Breast epithelium (tissue), 4 donors: ENCODE measurements at regions of chr14 and their contacts with region 1.

Region 1: DNA sequence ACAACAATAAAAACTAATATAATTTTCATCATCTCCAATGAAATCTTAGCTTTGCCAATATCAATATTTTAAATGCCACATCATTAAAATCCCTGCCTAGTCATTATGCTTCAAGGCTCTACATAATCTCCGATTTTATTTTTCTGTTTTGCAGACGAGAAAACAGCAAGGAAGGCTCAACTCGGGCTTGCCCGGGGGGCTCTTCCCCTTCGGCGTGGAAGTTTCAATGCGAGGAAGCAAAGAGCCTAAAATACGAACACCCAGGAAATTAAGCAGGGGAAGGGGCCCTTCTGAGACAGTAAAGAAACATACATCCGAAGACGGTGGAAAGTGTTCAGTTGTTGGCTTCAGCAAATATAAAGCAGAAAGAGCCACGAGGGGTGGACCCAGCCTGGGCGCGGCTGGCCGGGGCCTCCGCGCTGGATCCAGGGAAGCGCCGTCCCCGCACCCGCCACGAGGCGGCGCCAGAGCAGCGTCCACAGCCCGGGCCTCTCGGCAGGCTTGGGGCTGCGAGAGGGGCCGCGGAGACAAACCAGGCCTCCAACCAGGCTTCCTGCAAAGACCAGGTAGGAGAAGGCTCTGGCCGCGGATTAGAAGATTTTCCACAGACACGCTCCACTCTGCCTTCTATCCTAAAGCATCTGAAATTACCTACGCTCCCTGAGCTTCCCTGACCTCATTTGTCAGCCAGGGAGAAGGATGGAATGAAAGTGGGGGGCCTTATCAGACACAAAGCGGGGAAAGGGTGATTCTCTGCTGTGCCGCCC is 77.2 kb downstream of the SERPINA3 start:
- DNase-seq: peak; percentile 27 to 67
- H3K4me3 ChIP-seq: peak overlapping the region in 1 of 3 donors; percentile 45
- H3K27ac ChIP-seq: no peak overlapping the region
- H3K4me1 ChIP-seq: peaks cover 0 to 5% of the 10 kb centered on the region in 2 donors
- H3K27me3 ChIP-seq: no peaks in the 10 kb centered on the region
- CTCF ChIP-seq: peak; percentile 93 to 98 (median 95)
- POLR2A ChIP-seq: no peak

Region 2: DNA sequence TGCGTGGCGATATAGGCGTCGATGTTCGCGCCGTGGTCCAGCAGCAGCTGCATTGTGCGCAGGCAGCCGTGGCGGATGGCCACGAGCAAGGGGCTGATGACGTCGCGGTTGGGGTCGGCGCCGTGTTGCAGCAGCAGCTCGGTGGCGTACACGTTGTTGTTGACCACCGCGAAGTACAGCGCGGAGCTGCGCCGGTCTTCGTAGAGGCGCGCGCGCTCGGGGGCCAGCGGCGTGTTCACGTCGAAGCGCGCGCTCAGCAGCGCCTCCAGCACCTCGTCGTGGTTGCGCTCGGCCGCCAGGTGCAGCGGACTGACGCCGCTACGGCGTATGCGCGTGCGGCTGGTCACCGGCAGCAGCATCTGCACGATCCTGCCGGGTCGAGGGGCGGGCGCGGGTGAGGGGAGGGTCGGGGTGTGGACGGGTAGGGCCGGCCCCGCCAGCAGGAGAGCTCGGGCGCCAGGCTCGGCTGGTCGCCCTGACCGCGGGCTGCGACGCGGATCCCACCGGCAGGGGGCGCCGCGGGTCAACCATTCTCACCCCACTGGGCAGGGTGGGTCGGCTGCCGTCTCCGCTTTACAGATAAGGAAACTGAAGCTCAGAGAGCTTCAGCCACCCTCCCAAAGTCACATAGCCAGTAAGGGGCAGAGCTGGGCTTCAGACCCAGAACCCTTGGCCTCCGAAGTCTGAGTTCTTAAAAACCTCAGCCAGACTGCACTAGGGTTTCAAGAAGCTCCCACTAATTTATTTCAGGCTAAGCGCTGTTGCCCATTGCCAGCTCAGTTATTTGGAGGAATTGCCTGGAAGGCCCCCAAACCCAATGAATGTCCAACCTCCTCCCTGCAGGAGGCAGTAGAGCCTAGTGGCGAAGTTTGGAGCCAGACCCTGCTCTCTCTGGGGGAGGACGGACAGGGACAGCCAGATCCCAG is 749.8 kb before region 1 on chr14:
- intact Hi-C with region 1: loop called (anchors 10 kb)
- DNase-seq: peak; percentile 59 to 61
- H3K4me3 ChIP-seq: peak overlapping the region in 2 of 3 donors; percentile 33 to 61
- H3K27ac ChIP-seq: no peak overlapping the region
- H3K4me1 ChIP-seq: no peaks in the 10 kb centered on the region
- H3K27me3 ChIP-seq: peaks cover 0 to 9% of the 10 kb centered on the region in 2 donors
- CTCF ChIP-seq: peak; percentile 49 to 69 (median 62)
- POLR2A ChIP-seq: no peak

Region 3: DNA sequence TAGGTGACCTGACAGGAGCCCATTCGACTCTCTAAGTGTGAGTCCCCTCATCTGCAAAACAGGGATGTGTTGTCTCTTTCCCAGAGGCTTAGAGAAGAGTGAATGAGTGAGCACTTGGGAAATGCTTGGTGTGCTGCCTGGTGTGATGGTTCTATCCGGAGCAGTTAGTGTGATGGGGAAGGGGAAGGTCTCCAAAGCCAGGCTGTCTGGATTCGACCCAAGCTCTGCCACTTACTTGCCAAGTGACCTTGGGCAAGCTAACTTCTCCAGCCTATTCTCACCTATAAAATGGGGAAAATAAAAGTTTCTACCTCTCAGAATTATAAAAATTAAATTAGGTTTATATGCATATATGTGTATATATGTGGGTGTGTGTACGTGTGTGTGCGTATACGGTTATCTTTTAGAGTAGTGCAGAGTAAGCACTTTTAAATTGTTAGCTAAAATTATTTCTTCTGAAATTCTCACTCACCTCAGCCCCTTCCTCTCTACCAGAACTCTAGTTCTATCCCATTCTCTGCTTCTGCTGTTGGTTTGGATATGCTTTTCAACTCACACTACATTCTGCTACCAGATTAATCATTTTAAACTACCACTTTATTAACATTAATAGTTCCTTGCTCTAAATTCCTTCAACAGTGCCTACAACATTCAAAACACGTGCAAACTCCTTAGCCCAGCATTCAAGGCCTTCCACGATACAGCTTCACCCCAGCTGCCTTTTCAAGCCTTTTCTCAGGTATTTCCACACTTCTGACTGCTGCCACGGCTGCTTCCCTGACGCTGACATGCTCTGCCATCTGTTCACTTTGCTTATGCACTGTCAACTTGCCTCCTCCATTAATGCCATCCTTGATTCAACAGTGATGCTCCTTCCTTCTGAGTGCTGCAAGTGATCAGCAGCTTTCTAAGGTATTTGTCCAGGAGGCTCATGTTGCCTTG is 412.6 kb after region 1 on chr14:
- intact Hi-C with region 1: loop called (anchors 5 kb)
- DNase-seq: no peak
- H3K4me3 ChIP-seq: no peak overlapping the region
- H3K27ac ChIP-seq: no peak overlapping the region
- H3K4me1 ChIP-seq: no peaks in the 10 kb centered on the region
- H3K27me3 ChIP-seq: no peaks in the 10 kb centered on the region
- CTCF ChIP-seq: no peak
- POLR2A ChIP-seq: no peak